Left colon (tissue), 2 donors: ENCODE measurements at regions of chrX and their contacts with region 1.

Region 1: DNA sequence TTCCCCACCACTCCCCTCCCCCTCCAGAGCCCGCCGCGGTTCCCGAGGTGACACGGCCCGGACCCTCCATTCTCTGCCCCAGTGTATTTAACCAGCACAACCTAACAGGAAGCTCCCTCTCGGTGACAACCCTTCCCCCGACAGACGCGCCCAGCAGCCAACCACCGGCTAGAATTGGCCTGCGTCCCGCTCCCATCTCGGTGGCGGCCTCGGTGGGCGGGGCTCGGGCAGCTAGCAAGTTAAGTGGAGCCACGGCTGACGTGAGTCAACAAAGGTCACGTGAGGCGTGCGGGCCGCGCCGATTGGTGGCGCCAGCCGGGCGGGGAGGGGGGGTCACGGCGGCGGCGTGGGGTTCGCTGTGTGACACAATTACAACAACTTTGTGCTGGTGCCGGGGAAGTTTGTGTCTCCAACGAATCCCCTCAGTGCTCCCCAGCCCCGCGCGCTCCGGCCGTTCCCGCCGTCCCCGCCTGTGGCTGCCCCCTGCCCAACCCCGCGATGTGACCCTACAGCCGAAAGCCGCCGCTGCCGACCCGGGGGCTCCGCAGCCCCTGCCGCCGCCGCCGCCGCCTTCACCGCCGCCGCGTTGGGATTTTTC is at the start of gene KDM6A:
- DNase-seq: peak; percentile 99 to 100
- ATAC-seq: peak; percentile 84
- total RNA-seq, gene KDM6A: 38.5 to 42.2 TPM

Region 2: DNA sequence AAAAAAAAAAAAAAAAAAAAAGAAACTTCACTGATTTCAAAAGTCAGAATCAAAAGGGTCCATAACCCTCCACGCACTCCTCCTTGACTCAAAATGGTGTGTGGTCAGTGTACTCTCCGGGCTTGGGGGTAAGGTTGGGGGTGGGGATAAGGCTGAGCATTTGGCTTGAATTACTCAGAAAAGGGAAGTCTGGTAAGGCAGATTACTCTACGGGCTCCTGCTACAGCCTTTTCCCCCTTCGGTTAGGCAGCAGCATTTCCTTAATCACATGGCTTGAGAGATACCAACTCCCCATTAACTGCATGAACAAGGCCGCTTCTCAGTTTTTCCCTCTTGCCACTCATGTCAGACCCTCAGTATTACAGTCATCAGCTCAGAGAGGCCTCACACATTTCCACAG is 164.4 kb before region 1 on chrX:
- intact Hi-C with region 1: no loop called
- DNase-seq: no peak
- ATAC-seq: no peak

Region 3: GRCh38 chrX:44765556-44765955 is 107.4 kb before region 1 on chrX:
- intact Hi-C with region 1: loop called in 1 of 2 experiments (anchors 10 kb)
- DNase-seq: no peak
- ATAC-seq: no peak

Region 4: DNA sequence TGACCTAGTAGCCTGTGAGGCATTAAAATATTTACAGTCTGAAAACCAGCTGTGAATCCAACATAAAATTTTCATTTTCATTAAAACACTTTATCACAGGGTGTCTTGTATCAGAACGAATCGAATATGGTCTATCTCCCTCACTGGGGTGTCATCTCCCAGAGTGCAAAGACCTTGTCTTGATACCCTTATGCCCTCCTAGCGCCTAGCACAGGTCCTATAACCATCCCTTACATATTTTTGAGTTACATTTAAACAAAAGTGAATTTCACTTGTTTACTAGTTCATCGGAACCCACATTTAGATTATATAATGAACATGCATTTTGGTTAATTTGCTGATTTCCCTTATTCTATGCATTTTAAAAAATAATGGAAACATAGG is 313.7 kb after region 1 on chrX:
- intact Hi-C with region 1: no loop called
- DNase-seq: no peak
- ATAC-seq: peak; percentile 14